Activated B cell treated with CpG ODN at 0.5 μM for 24 hours (primary cell): ENCODE measurements at regions of chr17 and their contacts with region 1.

Region 1: DNA sequence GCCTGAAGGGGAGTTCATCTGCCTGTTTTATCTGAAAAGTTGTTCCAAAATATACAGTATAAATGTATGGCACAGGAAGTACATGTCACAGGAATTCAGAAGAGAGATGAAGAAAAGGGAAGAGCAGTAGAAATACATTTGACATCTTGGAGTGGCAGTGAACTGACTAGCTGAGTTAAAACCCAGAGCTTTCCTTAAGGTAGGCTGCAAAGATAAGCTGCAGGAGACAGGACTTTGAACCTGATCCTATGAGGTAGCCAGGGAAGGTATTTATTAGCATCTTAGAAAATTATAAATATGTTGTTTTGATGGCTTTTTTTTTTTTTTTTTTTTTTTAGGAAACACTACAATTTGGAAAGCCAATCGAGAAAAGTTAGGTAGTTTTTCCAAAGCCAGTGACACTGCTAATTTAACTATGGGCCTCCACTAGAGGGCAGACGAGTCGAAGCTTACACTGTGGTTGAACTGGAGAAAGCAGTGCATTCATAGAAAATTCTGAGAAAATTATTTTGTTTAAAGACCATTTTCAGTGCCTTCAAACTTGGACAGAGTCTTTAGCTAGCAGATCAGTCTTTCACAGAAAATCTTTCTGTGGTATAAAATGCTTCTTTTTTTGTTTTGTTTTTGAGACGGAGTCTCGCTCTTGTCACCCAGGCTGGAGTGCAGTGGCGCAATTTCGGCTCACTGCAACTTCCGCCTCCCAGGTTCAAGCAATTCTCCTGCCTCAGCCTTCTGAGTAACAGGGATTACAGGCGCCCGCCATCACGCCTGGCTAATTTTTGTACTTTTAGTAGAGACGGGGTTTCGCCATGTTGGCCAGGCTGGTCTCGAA is 122.3 kb downstream of the SSH2 start:
- DNase-seq: peak; percentile 23
- ATAC-seq: peak; percentile 83
- H3K4me3 Mint-ChIP-seq: peak overlapping the region; percentile 49
- H3K27ac Mint-ChIP-seq: no peak overlapping the region
- H3K4me1 Mint-ChIP-seq: peaks cover 29% of the 10 kb centered on the region
- H3K27me3 Mint-ChIP-seq: no peaks in the 10 kb centered on the region
- CTCF ChIP-seq: peak; percentile 49

Region 2: DNA sequence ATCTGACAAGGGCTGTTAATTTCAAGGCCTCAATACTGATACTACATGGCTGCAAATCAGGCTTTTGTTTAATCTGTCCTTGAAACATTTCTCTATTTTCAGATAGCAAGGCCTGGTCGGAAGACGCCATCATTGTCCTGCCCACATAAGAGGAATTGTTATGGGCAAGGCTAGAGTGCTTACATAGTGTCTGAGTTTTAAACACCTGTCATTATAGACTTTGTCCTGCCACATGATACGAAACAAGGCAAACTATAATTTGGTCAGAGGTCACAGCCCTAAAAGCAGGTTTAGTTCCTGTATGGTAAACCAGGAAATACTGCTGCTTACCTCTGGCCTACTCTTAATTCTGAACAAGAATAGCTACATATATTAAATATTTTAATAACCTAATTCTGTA is 17.9 kb after region 1 on chr17:
- CTCF ChIA-PET with region 1: interaction called, 7 read pairs
- POLR2A ChIA-PET with region 1: interaction called, 10 read pairs
- intact Hi-C with region 1: no loop called
- DNase-seq: no peak
- ATAC-seq: no peak
- H3K4me3 Mint-ChIP-seq: no peak overlapping the region
- H3K27ac Mint-ChIP-seq: no peak overlapping the region
- H3K4me1 Mint-ChIP-seq: peaks cover 4% of the 10 kb centered on the region
- H3K27me3 Mint-ChIP-seq: no peaks in the 10 kb centered on the region
- CTCF ChIP-seq: no peak

Region 3: DNA sequence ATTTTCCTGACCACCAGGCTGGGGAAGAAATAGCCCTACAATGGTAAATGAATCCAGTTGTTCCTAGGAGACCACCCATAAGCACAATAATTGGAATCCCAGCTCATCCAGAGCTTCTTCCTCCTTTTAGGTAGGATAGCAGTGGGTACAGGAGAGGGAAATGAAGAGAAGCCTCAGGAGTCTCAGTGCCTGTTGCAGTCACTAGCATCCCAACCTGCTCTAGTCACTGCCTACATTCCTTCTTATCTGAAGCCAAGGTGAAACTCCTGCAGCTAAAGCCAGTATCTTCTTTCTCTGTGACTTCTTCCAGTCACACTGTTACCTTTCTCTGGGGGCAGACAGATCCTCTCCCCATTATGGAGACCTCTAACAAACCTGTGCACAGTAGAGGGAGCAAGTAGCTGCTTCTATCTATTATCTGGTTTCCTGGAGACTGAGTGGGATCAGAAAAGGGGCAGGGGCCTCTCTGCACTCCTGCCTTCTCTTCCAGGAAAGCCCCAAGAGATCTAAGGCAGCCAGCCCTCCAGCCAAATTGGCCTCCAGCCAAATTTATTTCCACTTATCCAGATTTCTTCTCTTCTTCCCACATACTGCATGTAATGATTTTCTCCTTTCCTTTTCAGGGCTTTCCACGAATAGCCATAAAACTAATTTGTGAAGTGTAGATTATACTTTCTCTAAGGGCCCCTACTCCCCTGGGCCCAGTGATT is 36.8 kb after region 1 on chr17:
- CTCF ChIA-PET with region 1: interaction called, 11 read pairs
- POLR2A ChIA-PET with region 1: no interaction called
- intact Hi-C with region 1: loop called (anchors 5 kb)
- DNase-seq: no peak
- ATAC-seq: no peak
- H3K4me3 Mint-ChIP-seq: no peak overlapping the region
- H3K27ac Mint-ChIP-seq: no peak overlapping the region
- H3K4me1 Mint-ChIP-seq: peaks cover 17% of the 10 kb centered on the region
- H3K27me3 Mint-ChIP-seq: no peaks in the 10 kb centered on the region
- CTCF ChIP-seq: no peak

Region 4: DNA sequence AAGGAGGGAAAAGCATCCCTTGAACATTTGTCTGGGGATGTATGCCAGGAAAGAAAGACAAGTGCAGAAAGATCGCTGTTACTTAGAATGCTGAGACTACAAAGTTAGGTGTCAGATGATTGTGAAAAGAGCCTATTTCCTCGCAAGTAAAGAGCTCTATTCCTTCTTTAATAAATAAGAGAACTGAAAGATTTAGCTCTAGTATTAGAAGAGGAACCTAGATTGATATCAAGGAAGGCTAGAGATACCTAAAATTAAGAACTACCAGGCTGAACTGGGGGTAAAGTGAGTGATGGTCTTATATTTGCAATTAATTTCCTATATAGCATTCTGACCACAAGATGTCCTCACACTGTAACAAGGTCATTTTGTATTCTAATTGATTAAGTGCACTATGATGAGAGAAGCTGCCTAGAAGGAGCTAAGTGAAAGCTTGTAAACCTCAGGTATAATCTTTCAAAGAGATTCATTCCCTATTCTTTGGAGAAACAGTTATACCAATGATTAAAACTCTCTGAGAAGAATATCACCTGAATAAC is 60.0 kb after region 1 on chr17:
- CTCF ChIA-PET with region 1: interaction called, 9 read pairs
- POLR2A ChIA-PET with region 1: no interaction called
- intact Hi-C with region 1: loop called (anchors 10 kb)
- DNase-seq: no peak
- ATAC-seq: peak; percentile 37
- H3K4me3 Mint-ChIP-seq: no peak overlapping the region
- H3K27ac Mint-ChIP-seq: peak overlapping the region; percentile 3
- H3K4me1 Mint-ChIP-seq: peaks cover 49% of the 10 kb centered on the region
- H3K27me3 Mint-ChIP-seq: no peaks in the 10 kb centered on the region
- CTCF ChIP-seq: no peak

Region 5: DNA sequence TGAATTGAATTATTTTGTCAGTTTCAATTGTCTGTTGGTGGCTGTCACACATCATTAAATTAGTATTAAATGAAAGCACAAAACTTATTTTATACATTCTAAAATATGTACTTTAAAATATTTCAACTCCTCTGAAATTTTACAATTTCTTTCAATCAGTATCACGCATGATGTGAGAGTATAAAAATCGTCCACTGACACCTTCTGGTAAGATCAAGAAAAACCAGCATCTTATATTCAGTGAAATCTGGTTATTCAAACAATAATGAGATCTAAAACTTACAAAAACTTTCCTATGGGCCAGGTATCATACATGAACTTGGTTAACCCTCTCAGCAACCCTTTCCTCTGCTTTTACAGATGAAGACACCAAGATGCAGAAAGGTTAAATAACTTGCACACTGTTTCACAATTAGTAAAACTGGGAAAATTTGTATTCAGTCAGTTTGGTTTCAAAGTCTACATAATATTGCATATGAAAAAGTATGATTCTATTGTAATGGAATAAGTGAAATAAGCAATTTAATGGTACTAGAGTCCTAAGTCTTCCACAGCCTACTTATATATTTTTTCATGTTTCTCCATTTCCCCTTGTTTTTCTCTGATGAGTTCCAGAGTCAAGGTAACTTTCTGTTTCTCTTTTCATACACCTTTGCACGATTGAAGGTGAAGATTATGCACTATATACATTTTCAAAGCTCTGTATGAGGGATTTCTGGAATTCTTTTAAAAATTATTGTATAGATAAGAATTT is 192.4 kb after region 1 on chr17:
- CTCF ChIA-PET with region 1: interaction called, 7 read pairs
- POLR2A ChIA-PET with region 1: no interaction called
- intact Hi-C with region 1: loop called (anchors 1 kb)
- DNase-seq: no peak
- ATAC-seq: no peak
- H3K4me3 Mint-ChIP-seq: no peak overlapping the region
- H3K27ac Mint-ChIP-seq: no peak overlapping the region
- H3K4me1 Mint-ChIP-seq: no peaks in the 10 kb centered on the region
- H3K27me3 Mint-ChIP-seq: no peaks in the 10 kb centered on the region
- CTCF ChIP-seq: no peak

Region 6: GRCh38 chr17:30021708-30022317 is 214.1 kb after region 1 on chr17:
- CTCF ChIA-PET with region 1: interaction called, 49 read pairs
- POLR2A ChIA-PET with region 1: interaction called, 6 read pairs
- intact Hi-C with region 1: loop called (anchors 1 kb)
- DNase-seq: no peak
- ATAC-seq: peak; percentile 66
- H3K4me3 Mint-ChIP-seq: no peak overlapping the region
- H3K27ac Mint-ChIP-seq: no peak overlapping the region
- H3K4me1 Mint-ChIP-seq: no peaks in the 10 kb centered on the region
- H3K27me3 Mint-ChIP-seq: no peaks in the 10 kb centered on the region
- CTCF ChIP-seq: peak; percentile 83

Region 7: DNA sequence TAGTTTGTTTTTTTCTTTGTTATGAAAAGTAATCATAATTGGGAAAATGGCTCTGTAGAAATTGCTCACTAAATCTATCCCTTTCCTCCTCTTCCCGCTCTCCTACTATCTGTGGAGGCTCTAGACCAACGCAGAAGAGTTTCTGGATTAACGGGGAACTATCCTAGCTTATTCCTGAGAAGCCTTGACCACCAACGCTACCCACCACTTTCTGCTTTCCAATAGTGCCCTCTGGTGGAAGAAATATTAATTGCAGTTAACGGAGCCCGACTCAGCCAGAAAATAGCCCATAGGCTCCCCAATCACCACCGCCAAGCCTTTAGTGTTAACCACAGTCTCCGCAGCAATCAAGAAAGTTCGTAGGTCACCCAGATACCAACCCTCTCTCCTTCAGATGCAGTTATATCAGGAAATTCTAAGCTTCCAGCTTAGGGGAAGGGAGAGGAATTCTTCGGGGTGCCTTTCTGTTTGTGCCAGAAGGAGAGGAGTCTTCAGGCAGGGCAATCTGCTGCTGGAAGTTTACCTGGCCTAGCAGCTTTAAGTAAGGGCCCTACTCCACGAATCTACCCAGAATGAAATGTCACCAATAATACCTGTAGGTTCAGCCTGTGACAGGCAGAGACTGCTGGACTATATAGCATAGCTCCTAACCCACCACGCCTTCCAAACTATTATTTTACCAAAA is 285.9 kb after region 1 on chr17:
- CTCF ChIA-PET with region 1: interaction called, 12 read pairs
- POLR2A ChIA-PET with region 1: no interaction called
- intact Hi-C with region 1: loop called (anchors 1 kb)
- DNase-seq: no peak
- ATAC-seq: peak; percentile 68
- H3K4me3 Mint-ChIP-seq: no peak overlapping the region
- H3K27ac Mint-ChIP-seq: no peak overlapping the region
- H3K4me1 Mint-ChIP-seq: peaks cover 10% of the 10 kb centered on the region
- H3K27me3 Mint-ChIP-seq: peaks cover 21% of the 10 kb centered on the region
- CTCF ChIP-seq: peak; percentile 64